Activated T-helper 1 cell treated with anti-CD3 and anti-CD28 coated beads, Interleukin-12 subunit alpha, Interleukin-12 subunit beta, Interleukin-2, Interleukin-4 antibody, amounts not matched to agents 30 ng/mL and 10 ng/mL and 1 ng/mL, durations not matched to agents 14 hours and 24 hours and 36 hours (primary cell): ENCODE measurements at regions of chr12 and their contacts with region 1.

Region 1: GRCh38 chr12:106903241-106903945 is 52.3 kb upstream of the TMEM263 start:
- DNase-seq: peak; percentile 75
- H3K4me3 Mint-ChIP-seq: peak overlapping the region; percentile 57
- H3K27ac Mint-ChIP-seq: no peak overlapping the region
- H3K4me1 Mint-ChIP-seq: peaks cover 15% of the 10 kb centered on the region
- H3K27me3 Mint-ChIP-seq: peaks cover 31% of the 10 kb centered on the region

Region 2: GRCh38 chr12:106309671-106310505 is 593.5 kb before region 1 on chr12:
- intact Hi-C with region 1: loop called (anchors 5 kb)
- DNase-seq: no peak
- H3K4me3 Mint-ChIP-seq: no peak overlapping the region
- H3K27ac Mint-ChIP-seq: no peak overlapping the region
- H3K4me1 Mint-ChIP-seq: peaks cover 20% of the 10 kb centered on the region
- H3K27me3 Mint-ChIP-seq: no peaks in the 10 kb centered on the region

Region 3: DNA sequence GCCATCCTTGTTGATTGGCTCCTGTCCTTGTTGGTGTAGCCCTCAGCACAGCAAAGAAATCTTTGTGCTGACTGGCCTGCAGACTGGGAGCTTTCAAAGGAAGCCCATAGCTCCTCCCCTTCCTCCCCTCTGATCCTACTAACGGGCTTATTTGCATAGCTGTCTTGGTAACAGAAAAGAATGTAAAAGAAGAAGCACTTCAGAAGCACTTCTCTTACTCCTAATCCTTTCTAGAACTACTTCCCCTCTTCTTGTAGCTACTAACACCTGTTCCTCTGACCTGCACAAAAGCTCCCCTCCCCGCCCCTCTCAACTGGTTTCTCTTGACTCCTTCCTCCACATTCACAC is 143.2 kb before region 1 on chr12:
- intact Hi-C with region 1: no loop called
- DNase-seq: peak; percentile 14
- H3K4me3 Mint-ChIP-seq: peak overlapping the region; percentile 61
- H3K27ac Mint-ChIP-seq: peak overlapping the region; percentile 77
- H3K4me1 Mint-ChIP-seq: peaks cover 11% of the 10 kb centered on the region
- H3K27me3 Mint-ChIP-seq: no peaks in the 10 kb centered on the region

Region 4: DNA sequence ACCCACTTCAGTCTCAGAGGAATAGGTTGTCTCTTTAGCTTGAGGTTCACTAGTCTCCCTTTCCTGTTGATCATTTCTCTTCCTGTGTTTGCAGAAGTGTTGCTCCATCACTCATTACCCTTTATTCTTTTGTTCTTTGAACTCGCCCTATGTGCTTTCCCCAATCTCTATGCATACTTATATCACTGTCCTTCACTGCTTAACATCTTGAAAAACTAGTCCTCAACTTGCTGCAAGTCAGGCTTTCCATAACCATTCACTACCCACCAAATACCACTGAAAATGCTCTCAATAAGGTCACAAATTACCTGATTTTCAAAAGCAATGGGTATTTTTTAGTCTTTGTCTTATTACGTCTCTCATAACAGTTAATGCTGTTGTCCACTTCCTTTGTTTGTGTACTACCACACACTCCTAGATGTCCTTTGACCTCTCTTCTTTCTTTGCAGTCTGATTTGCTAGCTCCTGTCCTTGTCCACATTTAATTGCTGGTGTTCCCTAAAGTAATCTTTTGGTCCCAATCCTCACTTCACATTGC is 48.1 kb before region 1 on chr12:
- intact Hi-C with region 1: loop called (anchors 5 kb)
- DNase-seq: no peak
- H3K4me3 Mint-ChIP-seq: no peak overlapping the region
- H3K27ac Mint-ChIP-seq: no peak overlapping the region
- H3K4me1 Mint-ChIP-seq: peaks cover 2% of the 10 kb centered on the region
- H3K27me3 Mint-ChIP-seq: no peaks in the 10 kb centered on the region

Region 5: DNA sequence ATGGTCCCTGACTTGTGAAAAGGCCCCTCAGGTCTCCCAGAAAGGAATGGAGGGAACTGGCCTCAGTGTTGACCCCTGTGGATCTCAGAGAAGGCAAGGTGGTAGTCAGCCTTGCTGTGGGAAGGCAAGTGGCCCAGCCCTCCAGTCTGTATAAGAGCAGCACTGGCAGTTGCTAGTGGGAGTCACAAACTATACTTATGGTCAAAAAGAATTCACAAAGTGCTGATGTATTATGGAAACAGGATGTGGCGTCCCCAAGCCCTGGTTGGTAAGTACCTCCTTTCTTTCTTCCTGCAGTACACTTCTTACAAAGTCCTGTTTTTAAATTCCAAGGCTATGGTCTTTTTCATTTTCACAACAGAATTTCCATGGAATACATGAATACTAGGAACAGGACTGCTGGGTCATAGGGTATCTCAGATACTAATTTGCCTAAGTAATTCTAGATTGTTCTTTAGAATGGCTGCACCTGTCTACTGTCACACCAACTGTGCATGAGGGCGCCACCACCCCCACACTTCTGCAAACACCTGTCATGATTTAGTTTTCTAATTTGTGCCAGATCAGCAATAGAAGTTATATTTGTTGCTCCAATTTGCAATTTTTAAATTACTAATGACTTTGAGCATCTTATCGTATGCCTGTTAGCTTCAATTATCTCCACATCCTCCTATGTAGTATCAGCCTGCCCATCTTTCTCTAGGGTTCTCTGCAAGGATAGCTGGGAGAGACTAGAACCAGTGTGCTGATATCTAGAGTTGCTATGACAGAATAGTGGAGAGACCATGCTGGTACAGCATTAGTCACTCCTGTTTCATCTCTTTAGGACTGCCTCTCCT is 11.6 kb after region 1 on chr12:
- intact Hi-C with region 1: loop called (anchors 1 kb)
- DNase-seq: peak; percentile 16
- H3K4me3 Mint-ChIP-seq: peak overlapping the region; percentile 8
- H3K27ac Mint-ChIP-seq: peak overlapping the region; percentile 83
- H3K4me1 Mint-ChIP-seq: peaks cover 34% of the 10 kb centered on the region
- H3K27me3 Mint-ChIP-seq: peaks cover 2% of the 10 kb centered on the region

Region 6: GRCh38 chr12:106955377-106956047 is 52.1 kb after region 1 on chr12 and contains the start of gene TMEM263:
- intact Hi-C with region 1: loop called (anchors 5 kb)
- DNase-seq: peak; percentile 90
- H3K4me3 Mint-ChIP-seq: peak within 1 kb of the TSS; percentile 97
- H3K27ac Mint-ChIP-seq: peak within 1 kb of the TSS; percentile 94
- H3K4me1 Mint-ChIP-seq: peaks cover 21% of the 10 kb centered on the region
- H3K27me3 Mint-ChIP-seq: peaks cover 3% of the 10 kb centered on the region
- total RNA-seq, gene TMEM263: 25.5 and 25.9 TPM in 2 replicates